Naive thymus-derived CD4-positive, alpha-beta T cell (primary cell): ENCODE measurements at regions of chr12 and their contacts with region 1.

Region 1: GRCh38 chr12:49662998-49663843 is 39.9 kb downstream of the PRPF40B start:
- DNase-seq: peak; percentile 31 to 93 (median 85)
- ATAC-seq: peak; percentile 97
- H3K4me3 ChIP-seq: peak overlapping the region; percentile 56
- H3K4me3 Mint-ChIP-seq: peak overlapping the region; percentile 81 to 94 (median 86)
- H3K27ac ChIP-seq: peak overlapping the region; percentile 77
- H3K27ac Mint-ChIP-seq: peak overlapping the region; percentile 92 to 100 (median 98)
- H3K4me1 ChIP-seq: peaks cover 44 to 76% of the 10 kb centered on the region in 2 donors
- H3K4me1 Mint-ChIP-seq: peaks cover 59 to 96% (median 91%) of the 10 kb centered on the region in 7 donors
- H3K27me3 ChIP-seq: no peaks in the 10 kb centered on the region
- H3K27me3 Mint-ChIP-seq: no peaks in the 10 kb centered on the region

Region 2: GRCh38 chr12:49644620-49644994 is 18.6 kb before region 1 on chr12:
- CTCF ChIA-PET with region 1: interaction called, 39 read pairs
- POLR2A ChIA-PET with region 1: interaction called, 21 read pairs
- intact Hi-C with region 1: loop called (anchors 1 to 2 kb)
- DNase-seq: peak; percentile 71 to 86 (median 81)
- ATAC-seq: peak; percentile 96
- H3K4me3 ChIP-seq: no peak overlapping the region
- H3K4me3 Mint-ChIP-seq: peak overlapping the region in 9 of 10 donors; percentile 3 to 69 (median 41)
- H3K27ac ChIP-seq: peak overlapping the region; percentile 32
- H3K27ac Mint-ChIP-seq: peak overlapping the region; percentile 78 to 96 (median 89)
- H3K4me1 ChIP-seq: peaks cover 7 to 10% of the 10 kb centered on the region in 2 donors
- H3K4me1 Mint-ChIP-seq: peaks cover 25 to 56% (median 37%) of the 10 kb centered on the region in 7 donors
- H3K27me3 ChIP-seq: no peaks in the 10 kb centered on the region
- H3K27me3 Mint-ChIP-seq: no peaks in the 10 kb centered on the region

Region 3: DNA sequence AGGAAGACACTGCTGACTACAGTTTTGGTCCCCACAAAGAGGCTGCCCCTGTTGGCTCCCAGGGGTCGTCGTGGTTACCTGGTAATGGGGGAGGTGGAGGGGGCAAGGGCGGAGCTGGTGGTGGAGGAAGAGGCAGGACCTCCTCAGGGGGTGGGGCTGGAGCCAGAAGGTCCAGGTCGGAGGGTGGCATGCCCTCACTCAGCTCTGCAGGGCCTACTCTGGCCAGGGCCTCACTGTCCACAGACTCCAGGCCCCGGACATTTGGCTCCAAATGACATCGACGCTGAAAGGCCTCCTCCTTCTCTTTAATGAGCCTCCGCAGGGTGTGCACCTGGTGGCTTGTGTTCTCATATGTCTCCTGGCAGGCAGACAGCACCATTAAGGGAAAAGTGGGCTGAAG is 11.4 kb before region 1 on chr12:
- CTCF ChIA-PET with region 1: interaction called, 39 read pairs
- POLR2A ChIA-PET with region 1: interaction called, 21 read pairs
- intact Hi-C with region 1: no loop called
- DNase-seq: no peak
- ATAC-seq: no peak
- H3K4me3 ChIP-seq: no peak overlapping the region
- H3K4me3 Mint-ChIP-seq: no peak overlapping the region
- H3K27ac ChIP-seq: no peak overlapping the region
- H3K27ac Mint-ChIP-seq: peak overlapping the region in 7 of 9 donors; percentile 27 to 88 (median 62)
- H3K4me1 ChIP-seq: peaks cover 0 to 16% of the 10 kb centered on the region in 2 donors
- H3K4me1 Mint-ChIP-seq: peaks cover 26 to 59% (median 49%) of the 10 kb centered on the region in 7 donors
- H3K27me3 ChIP-seq: no peaks in the 10 kb centered on the region
- H3K27me3 Mint-ChIP-seq: no peaks in the 10 kb centered on the region

Region 4: DNA sequence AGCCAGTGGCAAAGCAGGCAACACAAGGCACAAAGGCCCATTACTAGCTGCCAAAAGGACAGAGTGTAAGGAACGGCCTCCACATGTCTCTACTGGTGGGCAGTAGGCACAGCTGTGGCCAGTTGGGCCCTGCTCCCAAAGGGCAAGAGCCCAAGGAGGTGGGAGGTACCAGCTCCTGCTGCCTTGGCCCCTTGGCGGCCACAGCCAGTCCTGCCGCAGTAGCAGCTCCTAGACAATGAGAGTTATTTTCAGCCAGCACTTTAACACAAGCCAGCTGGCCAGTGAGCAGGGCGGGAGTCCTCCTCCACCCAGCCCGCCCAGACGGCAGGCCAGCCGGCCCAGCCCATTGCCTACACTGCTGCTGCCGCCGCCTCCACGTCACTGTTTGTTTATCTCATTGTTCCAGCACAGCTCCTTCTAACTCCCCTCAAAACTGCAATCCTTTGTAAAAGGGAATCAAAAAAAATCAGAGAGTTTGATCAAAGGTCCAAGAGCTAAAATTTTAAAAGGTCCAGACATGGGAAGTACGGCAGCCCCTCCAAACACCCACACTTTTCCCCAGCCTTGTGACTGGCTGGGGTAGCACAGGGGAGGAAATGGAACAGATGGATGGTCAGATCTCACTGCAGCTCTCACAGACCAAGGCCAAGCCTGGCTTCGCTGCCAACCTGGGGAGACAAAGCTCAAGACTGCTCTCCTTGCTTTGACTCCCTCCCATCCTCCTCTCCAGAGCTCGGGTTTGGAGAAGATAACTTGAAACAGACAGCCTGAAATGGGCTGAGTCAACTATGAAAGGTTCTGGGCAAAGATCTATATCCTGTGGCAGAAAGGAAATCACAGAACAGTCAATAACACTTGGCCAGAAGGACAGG is 10.5 kb after region 1 on chr12:
- CTCF ChIA-PET with region 1: interaction called, 21 read pairs
- POLR2A ChIA-PET with region 1: interaction called, 32 read pairs
- intact Hi-C with region 1: loop called (anchors 1 kb)
- DNase-seq: peak in 3 of 9 donors; percentile 11 to 26 (median 12)
- ATAC-seq: no peak
- H3K4me3 ChIP-seq: no peak overlapping the region
- H3K4me3 Mint-ChIP-seq: peak overlapping the region; percentile 18 to 85 (median 70)
- H3K27ac ChIP-seq: peak overlapping the region; percentile 85
- H3K27ac Mint-ChIP-seq: peak overlapping the region; percentile 71 to 99 (median 96)
- H3K4me1 ChIP-seq: peaks cover 39 to 64% of the 10 kb centered on the region in 2 donors
- H3K4me1 Mint-ChIP-seq: peaks cover 60 to 92% (median 92%) of the 10 kb centered on the region in 7 donors
- H3K27me3 ChIP-seq: no peaks in the 10 kb centered on the region
- H3K27me3 Mint-ChIP-seq: no peaks in the 10 kb centered on the region

Region 5: GRCh38 chr12:49678711-49679110 is 15.5 kb after region 1 on chr12:
- CTCF ChIA-PET with region 1: interaction called, 21 read pairs
- POLR2A ChIA-PET with region 1: interaction called, 32 read pairs
- intact Hi-C with region 1: loop called in 1 of 2 experiments (anchors 2 kb)
- DNase-seq: no peak
- ATAC-seq: no peak
- H3K4me3 ChIP-seq: no peak overlapping the region
- H3K4me3 Mint-ChIP-seq: no peak overlapping the region
- H3K27ac ChIP-seq: no peak overlapping the region
- H3K27ac Mint-ChIP-seq: peak overlapping the region in 4 of 9 donors; percentile 30 to 69 (median 54)
- H3K4me1 ChIP-seq: peaks cover 4 to 15% of the 10 kb centered on the region in 2 donors
- H3K4me1 Mint-ChIP-seq: peaks cover 32 to 83% (median 74%) of the 10 kb centered on the region in 7 donors
- H3K27me3 ChIP-seq: no peaks in the 10 kb centered on the region
- H3K27me3 Mint-ChIP-seq: no peaks in the 10 kb centered on the region

Region 6: GRCh38 chr12:49698619-49699545 is 35.7 kb after region 1 on chr12:
- CTCF ChIA-PET with region 1: interaction called, 28 read pairs
- POLR2A ChIA-PET with region 1: interaction called, 131 read pairs
- intact Hi-C with region 1: no loop called
- DNase-seq: peak in 8 of 9 donors; percentile 15 to 54 (median 24)
- ATAC-seq: peak; percentile 75
- H3K4me3 ChIP-seq: peak overlapping the region; percentile 54
- H3K4me3 Mint-ChIP-seq: peak overlapping the region; percentile 75 to 90 (median 84)
- H3K27ac ChIP-seq: peak overlapping the region; percentile 34
- H3K27ac Mint-ChIP-seq: peak overlapping the region; percentile 32 to 93 (median 83)
- H3K4me1 ChIP-seq: peaks cover 14 to 39% of the 10 kb centered on the region in 2 donors
- H3K4me1 Mint-ChIP-seq: peaks cover 44 to 74% (median 65%) of the 10 kb centered on the region in 7 donors
- H3K27me3 ChIP-seq: no peaks in the 10 kb centered on the region
- H3K27me3 Mint-ChIP-seq: no peaks in the 10 kb centered on the region

Region 7: DNA sequence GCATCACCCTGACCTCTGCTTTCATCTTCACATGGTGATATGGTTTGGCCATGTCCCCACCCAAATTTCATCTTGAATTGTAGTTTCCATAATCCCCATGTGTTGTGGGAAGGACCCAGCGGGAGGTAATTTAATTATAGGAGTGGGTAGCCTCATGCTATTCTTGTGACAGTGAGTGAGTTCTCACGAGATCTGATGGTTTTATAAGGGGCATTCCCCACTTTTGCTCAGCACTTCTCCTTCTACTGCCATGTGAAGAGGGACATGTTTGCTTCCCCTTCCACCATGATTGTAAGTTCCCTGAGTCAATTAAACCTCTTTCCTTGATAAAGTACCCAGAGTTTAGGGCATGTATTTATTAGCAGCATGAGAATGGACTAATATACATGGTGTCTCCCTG is 116.4 kb after region 1 on chr12:
- CTCF ChIA-PET with region 1: no interaction called
- POLR2A ChIA-PET with region 1: no interaction called
- intact Hi-C with region 1: no loop called
- DNase-seq: no peak
- ATAC-seq: no peak
- H3K4me3 ChIP-seq: no peak overlapping the region
- H3K4me3 Mint-ChIP-seq: no peak overlapping the region
- H3K27ac ChIP-seq: no peak overlapping the region
- H3K27ac Mint-ChIP-seq: no peak overlapping the region
- H3K4me1 ChIP-seq: peaks cover 0 to 8% of the 10 kb centered on the region in 2 donors
- H3K4me1 Mint-ChIP-seq: peaks cover 10 to 21% (median 13%) of the 10 kb centered on the region in 7 donors
- H3K27me3 ChIP-seq: peaks cover 0 to 8% of the 10 kb centered on the region in 2 donors
- H3K27me3 Mint-ChIP-seq: peaks cover 6 to 40% (median 37%) of the 10 kb centered on the region in 5 donors